Activated T-helper 2 cell treated with anti-CD3 and anti-CD28 coated beads, Interferon-gamma antibody, Interleukin-2, Interleukin-4, amounts not matched to agents 10 μg/mL and 5 μg/mL and 100 μg/mL, durations not matched to agents 14 hours and 24 hours and 36 hours (primary cell): ENCODE measurements at regions of chr5 and their contacts with region 1.

Region 1: GRCh38 chr5:96536991-96537785 is 104.1 kb upstream of the PCSK1 start:
- DNase-seq: peak; percentile 17
- H3K4me3 Mint-ChIP-seq: no peak overlapping the region
- H3K27ac Mint-ChIP-seq: peak overlapping the region; percentile 73
- H3K4me1 Mint-ChIP-seq: peaks cover 30% of the 10 kb centered on the region
- H3K27me3 Mint-ChIP-seq: peaks cover 12% of the 10 kb centered on the region

Region 2: GRCh38 chr5:95760273-95761191 is 776.7 kb before region 1 on chr5:
- intact Hi-C with region 1: loop called (anchors 5 kb)
- DNase-seq: no peak
- H3K4me3 Mint-ChIP-seq: peak overlapping the region; percentile 51
- H3K27ac Mint-ChIP-seq: peak overlapping the region; percentile 58
- H3K4me1 Mint-ChIP-seq: peaks cover 28% of the 10 kb centered on the region
- H3K27me3 Mint-ChIP-seq: peaks cover 58% of the 10 kb centered on the region

Region 3: DNA sequence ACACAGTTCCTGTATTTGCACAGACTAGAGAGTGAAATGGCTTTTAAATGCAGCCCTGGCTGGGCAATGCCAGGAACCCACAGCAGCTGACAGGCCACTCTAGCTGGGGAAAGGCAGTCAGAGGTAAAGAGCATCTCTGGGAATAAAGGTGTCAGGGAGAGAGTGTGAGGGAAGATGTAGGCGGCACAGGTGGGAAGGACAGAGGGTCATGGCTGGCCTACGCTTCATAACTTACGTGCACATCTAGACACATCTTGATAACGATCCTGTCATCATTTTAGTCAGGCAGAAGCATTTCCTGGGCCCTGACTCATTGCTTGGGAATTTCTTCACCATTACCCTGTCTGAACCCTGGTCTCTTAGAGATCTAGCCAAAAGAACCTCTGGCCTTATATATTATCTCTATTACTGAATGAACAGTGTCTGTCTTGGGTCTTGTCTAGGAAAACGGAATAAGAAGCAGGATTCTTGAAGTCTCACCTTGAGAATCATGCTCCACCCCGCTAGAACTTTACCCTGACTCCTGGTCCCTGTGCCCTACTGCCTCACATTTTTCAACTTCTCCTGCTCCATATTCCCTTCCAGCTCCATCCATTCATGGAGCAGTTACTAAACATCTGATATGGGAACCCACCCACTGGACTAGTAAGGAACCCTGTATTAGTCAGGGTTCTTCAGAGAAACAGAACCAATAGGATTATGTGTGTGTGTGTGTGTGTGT is 469.1 kb before region 1 on chr5:
- intact Hi-C with region 1: loop called (anchors 10 kb)
- DNase-seq: no peak
- H3K4me3 Mint-ChIP-seq: peak overlapping the region; percentile 19
- H3K27ac Mint-ChIP-seq: peak overlapping the region; percentile 91
- H3K4me1 Mint-ChIP-seq: peaks cover 74% of the 10 kb centered on the region
- H3K27me3 Mint-ChIP-seq: no peaks in the 10 kb centered on the region

Region 4: GRCh38 chr5:96344678-96345577 is 192.3 kb before region 1 on chr5:
- intact Hi-C with region 1: loop called (anchors 1 kb)
- DNase-seq: no peak
- H3K4me3 Mint-ChIP-seq: peak overlapping the region; percentile 2
- H3K27ac Mint-ChIP-seq: no peak overlapping the region
- H3K4me1 Mint-ChIP-seq: peaks cover 22% of the 10 kb centered on the region
- H3K27me3 Mint-ChIP-seq: peaks cover 42% of the 10 kb centered on the region

Region 5: DNA sequence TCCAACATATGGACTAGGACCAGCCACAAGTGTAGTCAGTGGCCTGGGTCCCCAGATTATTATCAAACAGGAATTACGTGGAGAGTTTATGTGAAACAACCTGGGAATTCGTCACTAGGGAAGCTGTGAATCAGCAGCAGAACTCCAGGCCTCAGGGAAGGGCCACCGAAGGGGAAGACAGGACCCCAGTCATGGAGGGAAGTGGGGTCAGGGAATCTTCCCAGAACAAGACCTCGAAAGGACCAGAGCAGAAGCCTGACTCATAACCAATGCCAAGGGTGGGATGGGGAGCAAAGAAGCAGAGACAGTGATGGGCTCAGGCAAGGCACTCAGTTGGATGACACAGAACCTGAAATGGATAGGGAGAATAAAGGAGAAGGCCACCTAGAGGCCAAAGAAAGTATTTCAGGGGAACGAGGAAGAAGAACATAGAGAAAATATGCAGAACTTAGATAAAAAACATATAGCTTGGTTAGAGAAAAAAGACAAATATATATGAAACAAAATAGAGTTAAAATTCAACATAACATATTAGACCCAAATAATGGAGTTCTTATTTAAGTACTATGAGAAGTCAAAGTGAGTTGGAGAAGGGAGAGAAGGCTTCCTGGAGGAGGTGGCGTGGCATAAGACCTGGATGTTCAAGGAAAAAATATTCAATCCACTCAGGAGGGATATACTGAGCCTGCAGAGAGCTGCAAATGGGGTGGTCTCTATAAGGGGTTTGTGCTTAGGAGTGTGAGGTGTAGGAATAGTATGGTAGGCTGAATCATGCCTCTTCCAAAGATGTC is 58.3 kb after region 1 on chr5:
- intact Hi-C with region 1: loop called (anchors 2 kb)
- DNase-seq: no peak
- H3K4me3 Mint-ChIP-seq: no peak overlapping the region
- H3K27ac Mint-ChIP-seq: no peak overlapping the region
- H3K4me1 Mint-ChIP-seq: peaks cover 14% of the 10 kb centered on the region
- H3K27me3 Mint-ChIP-seq: peaks cover 37% of the 10 kb centered on the region

Region 6: DNA sequence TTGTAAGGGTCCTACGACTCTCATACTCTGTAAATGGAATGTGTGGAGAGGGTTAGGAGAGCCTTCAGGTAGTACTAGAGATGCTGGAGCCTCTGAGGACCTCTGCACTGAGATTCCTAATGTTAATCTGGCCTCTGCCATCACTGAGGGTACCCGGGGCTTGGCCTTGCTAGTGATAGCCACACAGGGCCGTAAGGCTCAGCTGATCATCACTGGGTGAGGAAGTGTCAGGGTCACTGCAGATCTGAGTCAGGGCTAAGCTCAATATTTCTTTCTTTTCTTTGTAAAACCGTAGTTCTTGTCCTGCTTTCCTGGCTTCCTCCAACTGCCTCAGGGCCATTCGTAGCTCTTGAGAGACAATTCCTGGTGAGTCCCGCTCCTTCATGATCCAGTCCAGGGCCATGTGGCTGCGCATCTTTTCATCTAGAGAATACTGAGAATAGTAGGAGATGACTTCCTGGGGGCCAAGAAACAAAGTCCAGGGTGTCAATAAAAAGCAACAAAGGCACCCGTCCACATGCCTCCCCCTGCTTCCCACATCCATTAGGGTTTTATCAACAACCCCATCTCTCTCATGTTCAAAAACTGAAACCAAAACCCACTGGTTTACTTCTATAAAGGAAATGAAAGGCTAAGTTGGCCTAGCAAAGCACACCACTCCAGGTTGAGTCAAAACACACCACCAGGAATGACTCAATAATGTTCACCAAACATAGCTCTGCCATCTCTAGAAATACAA is 557.6 kb after region 1 on chr5:
- intact Hi-C with region 1: loop called (anchors 1 kb)
- DNase-seq: peak; percentile 41
- H3K4me3 Mint-ChIP-seq: no peak overlapping the region
- H3K27ac Mint-ChIP-seq: peak overlapping the region; percentile 56
- H3K4me1 Mint-ChIP-seq: peaks cover 22% of the 10 kb centered on the region
- H3K27me3 Mint-ChIP-seq: peaks cover 37% of the 10 kb centered on the region